Right ventricle myocardium inferior (tissue), 1 donor: ENCODE measurements at regions of chr6 and their contacts with region 1.

Region 1: DNA sequence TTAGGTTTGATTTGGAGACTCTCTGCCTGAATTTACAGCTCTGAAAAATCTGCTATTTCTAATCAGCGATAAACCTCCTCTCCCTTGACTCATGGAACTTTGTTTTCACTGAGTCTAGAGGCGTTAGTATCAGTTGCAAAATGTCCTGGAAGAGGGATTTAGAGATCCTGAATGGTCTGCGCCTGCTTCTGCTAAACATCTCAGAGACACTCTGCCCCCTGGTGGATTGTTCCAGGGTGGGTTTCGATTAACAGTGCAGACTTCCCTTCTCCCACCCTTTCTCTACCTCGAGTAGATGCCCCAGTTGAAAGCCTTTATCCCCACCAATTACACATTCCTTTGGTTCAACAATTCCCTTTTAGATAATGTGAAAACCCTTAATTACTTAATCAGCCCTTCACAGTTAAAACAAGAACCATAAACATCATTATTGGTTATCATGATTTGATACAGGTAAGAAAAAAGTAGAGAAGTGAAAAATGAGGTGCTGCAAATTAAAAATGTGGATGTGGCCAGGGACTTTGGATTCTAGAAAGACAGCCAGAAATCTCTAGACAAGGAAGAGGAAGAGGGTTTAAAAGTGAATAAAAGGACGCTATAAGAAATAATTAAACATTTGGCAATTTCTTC is 5.5 kb downstream of the HTR1B start:
- DNase-seq: no peak
- ATAC-seq: peak; percentile 92

Region 2: DNA sequence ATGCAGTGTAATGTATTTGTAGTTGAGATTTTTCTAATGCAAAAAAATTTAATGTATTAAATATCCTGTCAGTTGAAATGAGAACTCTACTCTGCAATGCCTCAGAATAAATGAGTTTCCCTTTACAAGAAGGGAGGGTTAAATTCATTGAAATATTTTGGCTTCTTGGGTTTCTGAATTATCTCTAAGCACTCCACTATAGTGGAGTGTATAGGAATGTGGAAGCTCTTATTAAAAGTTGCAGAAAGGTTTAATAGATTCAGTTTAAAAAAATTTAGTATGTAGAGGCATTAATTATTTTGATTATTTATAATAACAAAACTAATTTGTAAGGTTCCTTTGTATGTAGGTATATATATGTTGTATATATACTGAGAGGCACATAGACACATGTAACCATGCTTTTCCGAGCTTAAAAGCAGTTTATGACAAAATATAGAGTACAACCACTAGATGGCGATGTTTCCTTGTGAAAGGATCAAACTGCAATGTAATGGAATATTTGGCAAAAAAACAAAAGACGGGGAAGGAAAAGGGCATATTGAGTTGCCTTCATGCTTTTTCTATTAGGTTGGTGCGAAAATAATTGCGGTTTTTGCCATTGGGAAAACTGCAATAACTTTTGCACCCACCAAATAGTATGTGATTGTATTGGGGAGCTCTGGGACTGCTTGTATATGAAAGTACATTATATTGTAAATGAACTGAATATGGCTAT is 1564.6 kb before region 1 on chr6:
- intact Hi-C with region 1: loop called (anchors 5 kb)
- DNase-seq: no peak
- ATAC-seq: no peak

Region 3: GRCh38 chr6:75934643-75935472 is 1523.0 kb before region 1 on chr6:
- intact Hi-C with region 1: loop called (anchors 5 kb)
- DNase-seq: no peak
- ATAC-seq: peak; percentile 60

Region 4: DNA sequence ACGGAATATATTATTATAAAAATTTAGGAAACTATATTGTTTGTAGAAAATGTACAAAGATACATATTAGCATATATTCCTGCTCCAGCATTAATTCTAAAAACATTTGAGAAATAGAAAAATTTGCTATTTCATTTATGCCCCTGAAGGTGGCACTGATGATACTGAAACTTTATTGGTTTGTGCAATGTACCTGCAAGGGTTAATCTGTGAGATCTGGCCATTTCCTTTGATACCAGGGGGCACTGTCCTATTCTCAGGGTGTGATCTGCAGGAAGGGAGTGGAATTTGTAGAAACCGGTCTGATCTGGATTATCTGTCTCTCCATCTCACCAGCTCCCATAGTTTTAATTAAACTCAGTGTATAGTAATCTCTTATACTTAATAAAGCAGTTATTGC is 760.2 kb before region 1 on chr6:
- intact Hi-C with region 1: loop called (anchors 10 kb)
- DNase-seq: no peak
- ATAC-seq: no peak

Region 5: DNA sequence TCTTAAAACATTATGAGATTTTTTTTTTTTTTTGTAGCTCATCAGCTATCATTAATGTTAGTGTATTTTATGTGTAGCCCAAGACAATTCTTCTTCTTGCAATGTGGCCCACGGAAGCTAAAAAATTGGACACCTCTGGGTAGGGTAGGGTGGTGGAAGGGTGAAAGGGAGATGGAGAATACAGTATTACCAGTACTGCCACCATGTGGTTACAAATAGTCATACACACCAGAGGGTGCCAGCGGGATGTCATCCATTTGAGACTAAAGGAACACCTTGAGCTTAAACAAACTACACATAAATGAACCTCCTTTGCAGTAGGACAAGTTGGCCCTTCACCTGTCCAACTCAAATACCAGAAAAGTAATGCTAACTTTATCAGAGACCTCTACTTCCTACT is 596.4 kb before region 1 on chr6:
- intact Hi-C with region 1: loop called (anchors 10 kb)
- DNase-seq: no peak
- ATAC-seq: no peak

Region 6: GRCh38 chr6:77341058-77341986 is 116.5 kb before region 1 on chr6:
- intact Hi-C with region 1: loop called (anchors 10 kb)
- DNase-seq: peak; percentile 27
- ATAC-seq: peak; percentile 95

Region 7: DNA sequence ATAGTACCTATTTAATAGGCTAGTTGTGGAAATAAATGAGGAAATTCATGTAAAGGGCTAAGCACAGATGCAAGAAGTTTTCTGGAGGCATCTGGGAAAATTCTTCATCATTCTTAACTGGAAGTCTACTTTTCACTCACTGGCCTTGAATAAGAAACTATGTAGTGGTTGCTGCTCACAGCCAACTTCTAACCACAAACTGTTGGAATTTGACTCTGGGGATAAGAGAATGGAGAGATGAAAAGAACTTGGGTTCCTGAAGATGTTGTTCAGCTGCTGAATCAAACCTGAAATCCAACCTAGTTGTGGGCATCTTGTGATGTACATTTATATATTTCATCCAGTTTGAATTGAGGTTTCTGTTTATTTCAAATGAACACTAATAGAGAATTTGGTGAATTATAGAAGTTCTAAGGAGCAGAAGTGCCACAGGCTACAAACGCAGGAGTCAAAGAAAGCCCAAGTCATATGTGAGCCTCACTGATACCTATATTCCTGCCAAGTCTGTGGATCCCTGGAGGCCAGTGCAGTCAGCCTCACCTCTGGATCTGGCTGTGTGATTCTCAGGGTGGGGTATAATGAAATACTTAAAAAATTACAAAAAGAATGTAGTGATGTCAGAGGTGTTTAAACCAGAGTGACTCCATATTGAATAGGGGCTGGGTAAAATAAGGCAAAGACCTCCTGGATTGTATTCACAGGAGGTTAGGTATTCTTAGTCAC is 176.3 kb after region 1 on chr6:
- intact Hi-C with region 1: no loop called
- DNase-seq: no peak
- ATAC-seq: no peak